ENCODE measurements at regions of chr11 and their contacts with region 1.

Region 1: DNA sequence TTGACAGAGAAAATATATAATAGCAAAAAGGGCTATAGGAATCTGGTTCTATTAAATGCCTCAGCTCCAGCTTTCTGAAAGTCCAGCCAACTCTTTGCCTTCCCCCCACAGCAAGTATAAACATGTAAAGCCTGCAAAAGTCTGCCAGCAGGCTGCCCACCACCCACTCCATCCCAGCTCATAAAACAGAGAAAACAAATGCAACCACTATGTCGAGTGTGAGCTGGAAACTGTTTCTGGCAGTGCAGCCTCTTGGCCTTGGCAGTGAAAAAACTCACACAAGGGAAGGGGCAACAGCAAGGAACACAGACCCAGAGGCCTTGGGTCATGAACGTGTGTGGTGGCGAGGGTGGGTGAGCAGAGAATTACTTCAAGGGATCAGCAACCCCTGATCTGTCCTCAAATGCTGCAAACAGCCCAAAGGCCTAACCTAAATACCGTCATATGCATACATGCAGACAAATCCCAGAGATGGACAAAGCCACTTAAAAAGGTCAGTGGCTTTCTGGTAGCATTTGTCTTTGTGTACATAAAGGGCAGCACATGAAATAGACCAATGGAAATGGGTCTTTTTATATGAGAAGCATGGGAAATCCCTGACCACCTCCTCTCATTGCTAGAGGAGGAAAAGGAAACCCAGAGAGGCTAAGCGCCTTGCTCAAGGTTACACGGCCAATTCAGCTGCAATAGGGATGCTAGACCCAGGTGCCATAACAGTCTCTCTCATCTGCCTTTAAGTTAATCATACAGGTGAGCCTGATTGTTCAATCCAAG is 74.8 kb downstream of the NAT10 start:
- DNase-seq: no peak
- H3K4me3 ChIP-seq: no peak overlapping the region
- CTCF ChIP-seq: no peak

Region 2: DNA sequence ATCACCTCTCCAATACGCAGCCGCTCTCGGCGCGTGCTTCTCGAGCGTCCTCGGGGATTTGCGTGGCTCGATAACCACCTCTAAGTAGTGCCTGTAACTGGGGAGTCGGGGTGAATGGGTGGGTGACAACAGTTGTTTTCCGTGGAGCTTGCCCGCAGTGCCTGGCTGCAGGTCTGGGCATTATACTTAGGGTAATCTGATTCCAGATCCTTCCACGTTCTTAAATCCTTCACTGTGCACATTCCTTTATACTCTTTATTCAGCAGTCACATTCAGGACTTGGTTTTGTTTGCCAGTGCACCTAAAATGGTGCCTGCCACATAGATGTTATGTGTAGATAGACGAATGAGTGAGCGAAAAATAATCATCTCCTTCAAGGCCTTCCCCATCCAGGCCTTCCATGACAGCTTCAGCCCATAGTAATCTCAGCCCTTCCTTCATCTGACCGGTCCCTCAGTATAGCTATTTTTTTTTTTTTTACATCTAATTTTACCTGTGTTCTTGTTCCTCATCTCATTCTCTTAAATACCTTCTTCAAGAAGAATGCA is 74.2 kb before region 1 on chr11:
- in situ Hi-C with region 1: no loop called
- DNase-seq: no peak
- H3K4me3 ChIP-seq: peak overlapping the region; percentile 88
- CTCF ChIP-seq: no peak

Region 3: GRCh38 chr11:34214961-34215805 is 35.0 kb after region 1 on chr11:
- in situ Hi-C with region 1: no loop called
- DNase-seq: no peak
- H3K4me3 ChIP-seq: no peak overlapping the region
- CTCF ChIP-seq: no peak

Region 4: GRCh38 chr11:34266090-34266912 is 86.1 kb after region 1 on chr11:
- in situ Hi-C with region 1: no loop called
- DNase-seq: peak; percentile 94
- H3K4me3 ChIP-seq: no peak overlapping the region
- CTCF ChIP-seq: no peak

Region 5: DNA sequence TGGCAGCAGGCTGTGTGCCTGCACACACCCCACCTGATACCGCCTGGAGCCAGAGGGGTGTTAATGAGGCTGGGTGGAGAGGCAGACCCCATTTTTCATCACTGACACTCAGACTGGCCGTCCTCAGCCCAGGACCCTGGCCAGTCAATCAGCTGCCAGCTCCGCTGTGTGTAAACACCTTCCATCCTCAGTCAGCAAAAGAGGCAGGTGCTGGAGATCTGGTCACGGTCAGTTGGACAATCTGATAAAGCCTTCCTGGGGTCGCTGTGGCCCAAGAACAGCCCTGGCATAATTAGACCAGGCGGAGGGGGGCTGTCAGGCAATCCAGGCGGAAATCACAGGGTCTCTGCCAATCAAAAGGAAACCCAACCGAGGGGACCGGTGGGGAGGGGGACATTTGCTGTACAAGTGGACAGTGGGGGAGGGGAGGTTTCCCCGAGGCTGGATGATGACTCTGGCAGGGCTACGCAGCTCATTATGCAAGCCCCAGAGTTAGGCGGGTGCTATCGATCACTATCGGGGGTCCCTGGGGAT is 104.7 kb after region 1 on chr11:
- in situ Hi-C with region 1: loop called (anchors 5 kb)
- DNase-seq: no peak
- H3K4me3 ChIP-seq: no peak overlapping the region
- CTCF ChIP-seq: no peak